ENCODE measurements at regions of chr1 and their contacts with region 1.

Region 1: GRCh38 chr1:162914601-162915000 is 53.6 kb upstream of the CCDC190 start:
- DNase-seq: no peak
- ATAC-seq: no peak

Region 2: GRCh38 chr1:162939039-162939438 is 24.4 kb after region 1 on chr1:
- intact Hi-C with region 1: loop called (anchors 2 kb)
- DNase-seq: no peak
- ATAC-seq: no peak

Measured in left ventricle myocardium superior (tissue), 1 donor.